ENCODE measurements at regions of chrX and their contacts with region 1.

Region 1: GRCh38 chrX:100768679-100769338 is 36.9 kb upstream of the SYTL4 start:
- DNase-seq: peak; percentile 92
- H3K4me3 ChIP-seq: no peak overlapping the region
- H3K27ac ChIP-seq: no peak overlapping the region
- H3K4me1 ChIP-seq: no peaks in the 10 kb centered on the region
- H3K27me3 ChIP-seq: no peaks in the 10 kb centered on the region
- CTCF ChIP-seq: peak in 2 of 3 experiments; percentile 98
- EP300 ChIP-seq: no peak
- POLR2A ChIP-seq: no peak

Region 2: DNA sequence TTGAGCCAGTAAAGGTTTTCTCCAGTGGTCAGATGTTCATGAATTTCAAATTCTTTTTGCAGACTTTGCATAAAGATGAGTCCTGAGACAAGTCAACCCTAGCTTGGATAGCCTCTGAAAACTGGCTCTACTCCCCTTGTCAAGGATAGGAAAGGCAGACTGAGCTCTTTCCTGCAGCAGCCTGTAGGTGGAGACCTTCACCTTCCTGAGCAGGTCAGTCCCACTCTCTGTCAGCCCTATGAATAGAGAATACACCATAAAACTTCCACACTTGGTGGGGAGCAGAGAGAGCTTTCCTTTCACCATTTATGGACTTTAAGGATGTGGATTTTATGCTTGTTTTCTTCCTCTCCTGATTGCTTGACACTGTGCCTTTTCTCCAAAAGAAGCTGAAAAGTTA is 400.6 kb before region 1 on chrX:
- intact Hi-C with region 1: no loop called
- DNase-seq: no peak
- H3K4me3 ChIP-seq: no peak overlapping the region
- H3K27ac ChIP-seq: no peak overlapping the region
- H3K4me1 ChIP-seq: no peaks in the 10 kb centered on the region
- H3K27me3 ChIP-seq: no peaks in the 10 kb centered on the region
- CTCF ChIP-seq: peak in 1 of 3 experiments; percentile 10
- EP300 ChIP-seq: no peak
- POLR2A ChIP-seq: no peak

Region 3: GRCh38 chrX:100512471-100512870 is 256.3 kb before region 1 on chrX:
- intact Hi-C with region 1: loop called (anchors 10 kb)
- DNase-seq: no peak
- H3K4me3 ChIP-seq: no peak overlapping the region
- H3K27ac ChIP-seq: no peak overlapping the region
- H3K4me1 ChIP-seq: no peaks in the 10 kb centered on the region
- H3K27me3 ChIP-seq: no peaks in the 10 kb centered on the region
- CTCF ChIP-seq: peak; percentile 51 to 71 (median 63)
- EP300 ChIP-seq: no peak
- POLR2A ChIP-seq: no peak

Region 4: DNA sequence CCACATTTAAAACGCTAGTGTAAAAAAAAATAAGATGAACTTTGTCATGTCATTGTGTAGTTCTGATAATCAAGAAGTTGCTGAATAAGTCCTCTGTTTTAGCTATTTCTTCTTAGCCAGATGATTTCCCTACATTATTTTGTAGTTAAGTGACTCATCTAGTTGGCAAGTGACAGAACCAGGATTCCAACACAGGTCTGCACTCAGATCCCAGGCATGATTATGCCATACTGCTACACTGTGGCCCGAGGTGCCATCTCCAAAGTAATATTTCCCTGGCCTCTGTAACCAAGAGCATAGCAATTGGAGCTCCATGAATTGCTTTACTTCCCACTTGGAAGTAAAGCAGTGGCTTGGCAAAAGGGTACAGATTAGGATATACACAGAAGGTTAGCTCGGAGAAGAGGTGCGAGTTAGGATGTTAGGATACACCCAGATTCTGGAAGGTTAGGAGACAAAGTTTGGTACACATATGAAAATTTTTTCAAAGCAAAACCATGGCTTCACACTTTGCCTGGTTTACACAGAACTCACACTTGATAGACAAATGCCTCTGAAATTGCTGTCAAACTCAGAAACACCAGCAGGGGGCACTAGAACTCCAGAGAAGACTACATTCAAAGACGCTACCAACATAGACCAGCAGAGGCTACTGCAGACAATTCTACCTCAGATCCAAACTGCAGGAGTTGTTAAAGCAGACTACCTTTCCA is 83.4 kb before region 1 on chrX:
- intact Hi-C with region 1: loop called (anchors 2 kb)
- DNase-seq: peak; percentile 93
- H3K4me3 ChIP-seq: no peak overlapping the region
- H3K27ac ChIP-seq: peak overlapping the region in 1 of 4 donors; percentile 15
- H3K4me1 ChIP-seq: peaks cover 0 to 17% (median 3%) of the 10 kb centered on the region in 4 donors
- H3K27me3 ChIP-seq: no peaks in the 10 kb centered on the region
- CTCF ChIP-seq: peak; percentile 76 to 88 (median 87)
- EP300 ChIP-seq: no peak
- POLR2A ChIP-seq: no peak